ENCODE measurements at regions of chr18 and their contacts with region 1.

Region 1: GRCh38 chr18:3088449-3088848 is 75.5 kb upstream of the LPIN2 start:
- DNase-seq: no peak
- ATAC-seq: no peak
- H3K4me3 ChIP-seq: no peak overlapping the region
- H3K27ac ChIP-seq: no peak overlapping the region
- H3K4me1 ChIP-seq: peaks cover 3% of the 10 kb centered on the region; the same call in 1 of the 2 replicates
- H3K27me3 ChIP-seq: no peaks in the 10 kb centered on the region; the same call in 1 of the 2 replicates
- CTCF ChIP-seq: no peak
- POLR2A ChIP-seq: no peak
- RAD21 ChIP-seq: no peak

Region 2: DNA sequence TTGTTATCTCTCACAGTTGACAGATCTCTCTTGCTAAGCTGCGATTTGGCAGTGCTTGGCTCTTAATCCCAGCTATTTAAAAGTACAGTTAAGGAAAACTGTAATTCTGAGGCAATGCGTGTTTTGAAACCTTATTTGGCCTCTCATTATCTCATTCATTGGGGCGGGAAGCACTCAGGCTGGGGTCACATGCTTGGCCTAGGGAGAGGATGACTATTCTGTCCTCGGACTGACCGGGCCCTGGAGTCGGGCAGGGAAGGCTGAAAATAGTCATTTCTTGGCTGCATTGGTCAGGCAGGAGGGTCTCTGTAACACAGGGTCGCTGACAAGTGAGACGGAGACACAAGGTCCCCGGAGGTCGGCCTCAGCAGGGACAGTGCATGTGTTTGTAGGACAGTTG is 261.9 kb before region 1 on chr18:
- CTCF ChIA-PET with region 1: no interaction called
- POLR2A ChIA-PET with region 1: no interaction called
- dilution Hi-C with region 1: no loop called
- in situ Hi-C with region 1: no loop called
- intact Hi-C with region 1: no loop called
- DNase-seq: no peak
- ATAC-seq: peak; percentile 56
- H3K4me3 ChIP-seq: no peak overlapping the region
- H3K27ac ChIP-seq: no peak overlapping the region
- H3K4me1 ChIP-seq: peaks cover 2% of the 10 kb centered on the region; the same call in 1 of the 2 replicates
- H3K27me3 ChIP-seq: peaks cover 8% of the 10 kb centered on the region
- CTCF ChIP-seq: no peak
- POLR2A ChIP-seq: no peak
- RAD21 ChIP-seq: no peak

Region 3: DNA sequence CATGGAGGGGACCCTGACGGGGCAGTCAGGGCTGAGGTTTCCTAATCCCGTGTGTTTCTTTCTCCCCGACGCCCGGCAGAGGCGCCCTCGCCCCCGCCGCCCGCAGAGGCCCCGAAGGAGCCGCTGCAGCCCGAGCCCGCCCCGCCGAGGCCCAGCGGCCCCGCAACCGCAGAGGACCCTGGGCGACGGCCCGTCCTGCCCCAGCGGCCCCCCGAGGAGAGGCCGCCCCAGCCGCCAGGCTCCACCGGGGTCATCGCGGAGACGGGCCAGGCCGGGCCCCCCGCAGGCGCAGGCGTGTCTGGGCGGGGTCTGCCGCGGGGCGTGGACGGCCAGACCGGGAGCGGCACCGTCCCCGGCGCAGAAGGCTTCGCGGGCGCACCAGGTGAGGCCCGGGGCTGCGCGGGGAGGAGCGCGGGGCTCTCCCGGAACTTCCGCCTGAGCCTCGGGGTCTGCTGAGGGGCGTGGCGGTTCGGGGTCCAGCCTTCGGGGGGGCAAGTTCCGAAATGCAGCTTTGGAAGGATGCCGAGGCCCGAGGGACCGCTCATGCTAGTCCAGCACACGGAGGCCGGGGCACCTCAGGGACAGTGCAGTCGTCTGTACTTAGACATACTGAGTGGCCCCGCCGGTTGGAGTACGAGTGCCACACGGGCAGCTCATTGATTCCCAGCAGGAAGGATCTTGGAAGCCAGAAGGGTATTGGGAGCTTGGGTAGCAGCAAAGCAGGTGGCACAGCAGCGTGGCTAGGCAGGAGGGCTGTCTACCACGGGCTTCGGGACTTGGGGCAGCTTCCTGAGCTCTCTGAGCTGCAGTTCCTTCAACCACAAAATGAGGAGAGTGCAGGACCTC is 181.5 kb before region 1 on chr18:
- CTCF ChIA-PET with region 1: no interaction called
- POLR2A ChIA-PET with region 1: no interaction called
- dilution Hi-C with region 1: no loop called
- in situ Hi-C with region 1: no loop called
- intact Hi-C with region 1: no loop called
- DNase-seq: no peak
- ATAC-seq: peak; percentile 54
- H3K4me3 ChIP-seq: peak overlapping the region; percentile 35
- H3K27ac ChIP-seq: no peak overlapping the region
- H3K4me1 ChIP-seq: peaks cover 2% of the 10 kb centered on the region; the same call in 1 of the 2 replicates
- H3K27me3 ChIP-seq: peaks cover 40% of the 10 kb centered on the region
- CTCF ChIP-seq: peak; percentile 16; the same call in 1 of the 2 replicates
- POLR2A ChIP-seq: no peak
- RAD21 ChIP-seq: no peak

Region 4: DNA sequence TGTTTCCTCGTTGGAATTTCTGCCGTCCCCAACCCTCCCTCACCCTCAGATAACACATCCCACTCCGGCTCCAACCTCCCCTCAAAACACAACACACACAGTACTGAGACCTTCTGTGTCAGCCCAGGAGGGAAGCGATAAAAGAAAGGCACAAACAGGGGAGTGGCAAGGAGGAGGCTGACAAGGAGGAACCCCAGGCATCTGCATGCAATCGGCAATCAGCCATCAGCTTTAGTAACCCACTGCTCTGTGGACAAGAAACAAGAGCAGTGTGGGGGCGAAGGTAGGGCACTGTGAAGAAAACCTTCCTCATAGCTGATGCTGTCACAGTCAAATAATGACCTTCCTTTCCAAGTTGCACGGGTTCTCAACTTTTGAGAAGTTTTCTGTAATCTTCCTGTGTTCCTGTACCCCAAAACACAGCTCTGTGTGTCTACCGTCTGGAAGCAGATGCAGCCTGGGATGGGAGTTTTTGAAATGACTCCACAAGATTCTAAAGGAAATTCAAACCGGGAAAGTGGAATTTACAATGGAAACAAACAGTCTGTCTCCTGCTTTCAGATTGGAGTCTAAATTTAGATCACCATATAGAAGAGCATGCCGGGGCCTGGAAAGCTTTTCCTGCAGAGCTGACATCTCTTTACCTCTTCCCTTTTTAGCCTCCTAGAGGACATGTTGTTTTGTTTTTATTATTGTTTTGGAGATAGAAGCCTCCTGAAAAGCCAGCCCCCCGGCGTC is 59.1 kb before region 1 on chr18:
- CTCF ChIA-PET with region 1: no interaction called
- POLR2A ChIA-PET with region 1: no interaction called
- dilution Hi-C with region 1: no loop called
- in situ Hi-C with region 1: no loop called
- intact Hi-C with region 1: loop called (anchors 5 kb)
- DNase-seq: peak; percentile 67
- ATAC-seq: peak; percentile 87
- H3K4me3 ChIP-seq: no peak overlapping the region; the same call in 1 of the 2 replicates
- H3K27ac ChIP-seq: peak overlapping the region; percentile 39
- H3K4me1 ChIP-seq: peaks cover 8% of the 10 kb centered on the region
- H3K27me3 ChIP-seq: no peaks in the 10 kb centered on the region
- CTCF ChIP-seq: no peak
- POLR2A ChIP-seq: no peak
- RAD21 ChIP-seq: no peak

Region 5: GRCh38 chr18:3074087-3074486 is 14.4 kb before region 1 on chr18:
- CTCF ChIA-PET with region 1: interaction called, 3 read pairs
- POLR2A ChIA-PET with region 1: no interaction called
- dilution Hi-C with region 1: no loop called
- in situ Hi-C with region 1: no loop called
- intact Hi-C with region 1: loop called (anchors 1 kb)
- DNase-seq: no peak
- ATAC-seq: no peak
- H3K4me3 ChIP-seq: no peak overlapping the region
- H3K27ac ChIP-seq: no peak overlapping the region
- H3K4me1 ChIP-seq: no peaks in the 10 kb centered on the region
- H3K27me3 ChIP-seq: no peaks in the 10 kb centered on the region
- CTCF ChIP-seq: no peak
- POLR2A ChIP-seq: no peak
- RAD21 ChIP-seq: no peak